ENCODE measurements at regions of chr4 and their contacts with region 1.

Region 1: GRCh38 chr4:38319456-38320342 is 344.3 kb upstream of the KLF3 start:
- DNase-seq: peak; percentile 77 to 85 (median 80)
- H3K4me3 ChIP-seq: peak overlapping the region in 1 of 2 donors; percentile 42
- H3K4me3 Mint-ChIP-seq: peak overlapping the region; percentile 80 to 96 (median 89)
- H3K27ac ChIP-seq: peak overlapping the region; percentile 65
- H3K27ac Mint-ChIP-seq: peak overlapping the region; percentile 88 to 98 (median 95)
- H3K4me1 ChIP-seq: peaks cover 30% of the 10 kb centered on the region
- H3K4me1 Mint-ChIP-seq: peaks cover 26 to 54% (median 41%) of the 10 kb centered on the region in 4 donors
- H3K27me3 ChIP-seq: no peaks in the 10 kb centered on the region
- H3K27me3 Mint-ChIP-seq: no peaks in the 10 kb centered on the region

Region 2: DNA sequence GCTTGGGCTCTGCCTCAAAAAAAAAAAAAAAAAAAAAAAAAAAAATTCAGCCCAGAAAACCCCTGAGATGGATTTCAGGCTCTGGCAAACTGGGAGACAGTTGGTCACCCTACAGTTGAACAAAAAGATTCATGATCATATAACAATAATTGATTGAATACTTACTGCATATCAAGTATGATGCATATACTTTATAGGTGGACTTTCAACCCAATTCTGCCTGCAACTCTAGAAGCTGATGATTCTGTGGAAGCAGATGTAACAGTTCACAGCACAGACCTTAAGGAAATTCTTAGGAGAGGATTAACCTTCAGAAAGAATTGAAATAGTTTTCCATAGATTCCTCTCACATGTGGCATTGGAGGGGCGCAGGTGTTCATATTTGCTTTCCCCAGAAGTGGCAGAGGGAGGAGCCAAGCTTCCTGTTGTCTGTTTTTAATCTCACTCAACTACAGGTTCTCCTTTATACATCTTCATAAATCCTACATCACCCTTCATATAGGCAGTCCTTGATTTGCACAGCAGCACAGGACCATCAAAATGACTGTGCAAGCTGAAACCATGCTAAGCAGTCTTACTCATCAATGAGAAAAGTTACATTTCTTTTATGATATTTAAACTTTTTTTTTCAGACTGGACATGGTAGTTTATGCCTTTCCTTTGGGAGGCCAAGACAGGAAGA is 194.9 kb after region 1 on chr4:
- CTCF ChIA-PET with region 1: interaction called, 17 read pairs
- POLR2A ChIA-PET with region 1: interaction called, 12 read pairs
- intact Hi-C with region 1: loop called (anchors 5 kb)
- DNase-seq: peak in 1 of 5 donors; percentile 9
- H3K4me3 ChIP-seq: no peak overlapping the region
- H3K4me3 Mint-ChIP-seq: peak overlapping the region; percentile 34 to 82 (median 74)
- H3K27ac ChIP-seq: no peak overlapping the region
- H3K27ac Mint-ChIP-seq: peak overlapping the region in 5 of 7 donors; percentile 4 to 86 (median 22)
- H3K4me1 ChIP-seq: peaks cover 81% of the 10 kb centered on the region
- H3K4me1 Mint-ChIP-seq: peaks cover 57 to 78% (median 69%) of the 10 kb centered on the region in 4 donors
- H3K27me3 ChIP-seq: no peaks in the 10 kb centered on the region
- H3K27me3 Mint-ChIP-seq: no peaks in the 10 kb centered on the region

Region 3: DNA sequence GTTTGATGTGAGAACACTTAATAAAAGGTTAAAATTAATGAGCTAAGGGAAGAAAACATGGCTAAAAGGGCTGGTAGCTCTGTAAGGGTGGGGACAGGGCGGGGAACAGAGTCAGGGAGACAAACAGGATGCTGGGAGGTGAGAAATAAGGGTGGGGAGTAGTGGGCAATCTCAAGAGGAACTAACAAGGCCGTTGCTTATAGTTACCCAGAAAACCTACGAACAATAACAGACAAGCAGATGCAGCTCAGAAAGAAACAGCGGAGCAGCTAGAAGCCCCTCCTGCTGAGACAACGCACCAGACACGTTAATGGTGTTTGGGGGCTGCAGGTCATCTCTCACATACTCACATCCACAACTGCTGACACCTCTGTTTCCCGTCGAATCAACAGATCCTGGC is 334.6 kb after region 1 on chr4:
- CTCF ChIA-PET with region 1: interaction called, 20 read pairs
- POLR2A ChIA-PET with region 1: interaction called, 19 read pairs
- intact Hi-C with region 1: no loop called
- DNase-seq: peak; percentile 73 to 84 (median 76)
- H3K4me3 ChIP-seq: peak overlapping the region in 1 of 2 donors; percentile 4
- H3K4me3 Mint-ChIP-seq: peak overlapping the region; percentile 78 to 88 (median 81)
- H3K27ac ChIP-seq: peak overlapping the region; percentile 78
- H3K27ac Mint-ChIP-seq: peak overlapping the region; percentile 82 to 100 (median 99)
- H3K4me1 ChIP-seq: peaks cover 61% of the 10 kb centered on the region
- H3K4me1 Mint-ChIP-seq: peaks cover 39 to 69% (median 54%) of the 10 kb centered on the region in 4 donors
- H3K27me3 ChIP-seq: no peaks in the 10 kb centered on the region
- H3K27me3 Mint-ChIP-seq: no peaks in the 10 kb centered on the region

Region 4: GRCh38 chr4:38730830-38731646 is 411.3 kb after region 1 on chr4:
- CTCF ChIA-PET with region 1: interaction called, 7 read pairs
- POLR2A ChIA-PET with region 1: interaction called, 3 read pairs
- intact Hi-C with region 1: loop called (anchors 1 kb)
- DNase-seq: peak; percentile 75 to 77 (median 76)
- H3K4me3 ChIP-seq: no peak overlapping the region
- H3K4me3 Mint-ChIP-seq: peak overlapping the region in 1 of 8 donors; percentile 39
- H3K27ac ChIP-seq: no peak overlapping the region
- H3K27ac Mint-ChIP-seq: peak overlapping the region in 2 of 7 donors; percentile 8 to 62
- H3K4me1 ChIP-seq: peaks cover 18% of the 10 kb centered on the region
- H3K4me1 Mint-ChIP-seq: peaks cover 12 to 29% (median 18%) of the 10 kb centered on the region in 4 donors
- H3K27me3 ChIP-seq: no peaks in the 10 kb centered on the region
- H3K27me3 Mint-ChIP-seq: peaks cover 0 to 3% of the 10 kb centered on the region in 2 donors

Region 5: DNA sequence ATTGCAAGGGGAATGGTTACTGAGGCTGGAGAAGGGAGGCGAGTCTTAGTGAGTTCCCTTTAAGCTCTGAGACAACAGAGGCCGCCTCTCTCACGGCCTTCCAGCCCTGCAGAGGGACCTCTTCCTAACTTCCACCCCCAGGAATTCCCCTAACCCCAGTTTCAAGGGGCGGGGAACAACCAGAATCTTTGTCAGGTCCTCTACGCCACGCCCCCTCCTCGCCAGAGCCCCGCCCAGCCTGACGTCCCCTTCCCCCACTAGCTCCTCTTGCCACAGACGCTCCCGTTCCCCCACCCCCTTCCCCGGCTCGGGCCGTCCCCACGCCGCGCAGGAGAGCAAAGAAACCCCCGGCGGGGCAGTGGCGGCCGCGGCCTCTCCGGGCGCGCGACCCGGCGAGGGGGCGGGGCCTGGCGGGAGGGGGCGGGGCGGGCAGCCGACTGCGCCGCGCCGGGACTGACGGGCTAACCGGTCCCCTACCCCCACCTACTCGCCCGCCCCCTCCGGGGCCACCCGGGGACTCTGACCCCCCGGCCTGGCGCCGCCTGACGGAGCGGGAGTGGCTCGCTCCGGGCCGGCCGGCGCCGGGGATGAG is 724.8 kb after region 1 on chr4:
- CTCF ChIA-PET with region 1: interaction called, 3 read pairs
- POLR2A ChIA-PET with region 1: no interaction called
- intact Hi-C with region 1: loop called (anchors 10 kb)
- DNase-seq: peak; percentile 91 to 100 (median 95)
- H3K4me3 ChIP-seq: peak overlapping the region; percentile 18 to 57
- H3K4me3 Mint-ChIP-seq: peak overlapping the region; percentile 87 to 98 (median 92)
- H3K27ac ChIP-seq: peak overlapping the region; percentile 82
- H3K27ac Mint-ChIP-seq: peak overlapping the region; percentile 94 to 98 (median 97)
- H3K4me1 ChIP-seq: peaks cover 46% of the 10 kb centered on the region
- H3K4me1 Mint-ChIP-seq: peaks cover 39 to 60% (median 45%) of the 10 kb centered on the region in 4 donors
- H3K27me3 ChIP-seq: no peaks in the 10 kb centered on the region
- H3K27me3 Mint-ChIP-seq: no peaks in the 10 kb centered on the region

Measured in CD4-positive, alpha-beta memory T cell (primary cell).